Posterior vena cava (tissue), 2 donors: ENCODE measurements at regions of chr10 and their contacts with region 1.

Region 1: GRCh38 chr10:35854661-35855060 is 212.6 kb upstream of the FZD8 start:
- DNase-seq: no peak

Region 2: GRCh38 chr10:34985823-34986222 is 868.8 kb before region 1 on chr10:
- intact Hi-C with region 1: no loop called
- DNase-seq: no peak

Region 3: GRCh38 chr10:36703179-36703578 is 848.5 kb after region 1 on chr10:
- intact Hi-C with region 1: loop called in 1 of 2 experiments (anchors 5 kb)
- DNase-seq: no peak